A673 (cell line): ENCODE measurements at regions of chr5 and their contacts with region 1.

Region 1: DNA sequence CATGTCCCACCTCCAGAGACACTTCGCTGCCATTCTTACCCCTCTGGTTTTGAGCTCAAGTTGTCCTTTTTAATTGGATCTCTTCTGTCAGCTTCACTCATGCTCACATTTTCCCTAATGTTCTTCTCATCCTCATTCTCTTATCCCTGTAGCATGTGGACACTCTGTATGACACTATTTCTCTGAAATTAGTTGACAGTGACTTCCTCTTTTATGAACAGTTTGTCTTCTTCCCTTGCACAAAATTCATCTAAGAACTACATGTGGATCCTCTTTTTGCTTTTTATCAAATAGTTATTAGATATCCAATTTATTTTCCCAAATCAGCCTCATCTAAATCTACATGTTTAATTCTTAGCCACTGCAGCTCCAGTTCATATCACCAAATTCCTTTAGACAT is 676.2 kb downstream of the MAT2B start:
- DNase-seq: no peak
- H3K4me3 ChIP-seq: no peak overlapping the region
- H3K27ac ChIP-seq: no peak overlapping the region
- H3K4me1 ChIP-seq: no peaks in the 10 kb centered on the region
- H3K27me3 ChIP-seq: no peaks in the 10 kb centered on the region
- CTCF ChIP-seq: no peak

Region 2: DNA sequence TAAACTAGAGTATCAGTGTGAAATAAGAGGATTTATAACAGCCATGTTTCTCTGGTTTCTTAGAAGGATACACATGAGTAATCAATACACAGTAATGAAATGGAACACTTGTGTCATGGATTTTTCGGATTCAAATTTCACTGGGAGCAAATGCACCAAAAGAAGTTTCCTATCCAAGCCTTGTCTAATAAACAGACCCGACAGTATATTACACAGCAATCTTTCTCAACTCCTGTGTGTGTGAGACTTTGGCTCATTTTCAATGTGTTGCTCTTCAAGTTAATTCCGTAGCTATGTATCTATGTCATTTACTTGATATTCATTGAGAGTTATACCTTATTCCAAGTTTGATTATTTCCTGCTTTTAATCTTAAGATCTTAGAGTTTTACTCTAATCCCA is 254.0 kb after region 1 on chr5:
- CTCF ChIA-PET with region 1: no interaction called
- POLR2A ChIA-PET with region 1: interaction called, 11 read pairs
- intact Hi-C with region 1: no loop called
- DNase-seq: no peak
- H3K4me3 ChIP-seq: no peak overlapping the region
- H3K27ac ChIP-seq: no peak overlapping the region
- H3K4me1 ChIP-seq: no peaks in the 10 kb centered on the region
- H3K27me3 ChIP-seq: peaks cover 26% of the 10 kb centered on the region
- CTCF ChIP-seq: no peak